Activated B cell treated with CpG ODN at 0.5 μM for 24 hours (primary cell): ENCODE measurements at regions of chr3 and their contacts with region 1.

Region 1: GRCh38 chr3:102038477-102039142 is 189.3 kb downstream of the NFKBIZ start:
- DNase-seq: no peak
- ATAC-seq: peak; percentile 82
- H3K4me3 Mint-ChIP-seq: peak overlapping the region; percentile 56
- H3K27ac Mint-ChIP-seq: peak overlapping the region; percentile 91
- H3K4me1 Mint-ChIP-seq: peaks cover 43% of the 10 kb centered on the region
- H3K27me3 Mint-ChIP-seq: no peaks in the 10 kb centered on the region
- CTCF ChIP-seq: no peak

Region 2: DNA sequence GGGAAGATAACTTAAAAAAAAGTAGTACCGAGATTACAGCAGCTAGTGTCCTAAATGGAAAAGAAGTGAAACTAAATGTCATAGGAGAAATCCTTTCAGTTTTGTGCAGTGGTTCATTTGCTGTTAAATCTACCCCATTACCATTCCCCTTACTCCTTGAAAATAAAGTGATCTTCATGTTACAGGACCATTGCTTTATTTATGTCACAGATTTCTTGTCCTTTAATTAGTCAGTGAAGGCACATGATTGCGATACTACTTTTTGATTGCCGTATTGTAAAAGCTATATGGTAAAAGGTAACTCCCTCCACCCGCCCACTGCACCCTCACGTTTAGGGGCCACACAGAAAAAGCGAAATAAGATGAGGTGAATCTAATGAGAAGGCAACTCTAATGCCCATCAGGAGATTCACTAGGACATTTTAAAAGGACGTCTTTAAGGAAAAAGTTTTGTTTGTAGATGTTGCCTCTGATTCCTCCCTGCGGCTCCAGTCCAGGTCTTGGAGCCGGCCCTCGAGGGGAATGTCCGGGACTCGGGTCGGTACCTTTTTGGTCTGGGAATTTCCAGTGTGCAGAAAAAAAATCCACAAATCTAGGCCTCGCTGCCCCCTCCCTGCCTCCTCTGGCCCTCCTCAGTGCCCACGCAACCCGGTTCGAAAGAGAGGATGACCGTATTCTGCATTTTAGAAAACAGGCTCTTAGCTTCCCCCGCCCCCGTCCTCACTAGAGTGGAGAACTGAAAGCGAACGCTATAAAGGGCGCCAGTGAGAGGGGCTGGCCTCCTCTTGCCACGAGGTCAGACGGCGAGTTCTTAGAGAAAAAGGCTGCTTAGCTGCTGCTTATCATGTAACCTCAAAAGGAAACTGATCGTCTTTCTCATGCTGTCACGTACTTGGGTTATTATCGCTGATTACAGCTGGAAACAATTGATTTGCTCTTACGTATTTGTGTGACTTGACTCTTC is 211.1 kb before region 1 on chr3:
- CTCF ChIA-PET with region 1: interaction called, 3 read pairs
- POLR2A ChIA-PET with region 1: interaction called, 21 read pairs
- intact Hi-C with region 1: no loop called
- DNase-seq: peak; percentile 68
- ATAC-seq: peak; percentile 86
- H3K4me3 Mint-ChIP-seq: peak overlapping the region; percentile 87
- H3K27ac Mint-ChIP-seq: peak overlapping the region; percentile 98
- H3K4me1 Mint-ChIP-seq: peaks cover 66% of the 10 kb centered on the region
- H3K27me3 Mint-ChIP-seq: no peaks in the 10 kb centered on the region
- CTCF ChIP-seq: no peak

Region 3: GRCh38 chr3:101861212-101861788 is 177.3 kb before region 1 on chr3:
- CTCF ChIA-PET with region 1: no interaction called
- POLR2A ChIA-PET with region 1: interaction called, 14 read pairs
- intact Hi-C with region 1: loop called (anchors 2 kb)
- DNase-seq: no peak
- ATAC-seq: peak; percentile 64
- H3K4me3 Mint-ChIP-seq: peak overlapping the region; percentile 51
- H3K27ac Mint-ChIP-seq: peak overlapping the region; percentile 75
- H3K4me1 Mint-ChIP-seq: peaks cover 76% of the 10 kb centered on the region
- H3K27me3 Mint-ChIP-seq: no peaks in the 10 kb centered on the region
- CTCF ChIP-seq: no peak

Region 4: DNA sequence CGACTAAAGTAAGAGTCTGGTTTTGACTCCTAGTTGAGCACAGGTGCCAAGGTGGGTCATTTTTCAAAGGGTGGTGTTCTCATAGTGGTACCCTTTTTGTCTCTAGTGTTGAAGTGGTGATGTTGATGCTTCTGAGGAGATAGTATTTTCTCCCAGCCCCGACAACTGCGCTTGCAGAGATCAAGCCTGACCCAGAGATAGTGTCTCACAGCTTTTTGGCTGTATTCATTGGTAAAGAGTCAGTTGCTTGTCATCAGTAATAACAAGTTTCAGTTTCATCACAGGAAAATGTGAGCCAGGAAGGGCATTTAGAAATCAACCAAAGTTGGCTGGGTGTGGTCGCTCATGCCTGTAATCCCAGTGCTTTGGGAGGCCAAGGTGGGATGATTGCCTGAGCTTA is 50.0 kb before region 1 on chr3:
- CTCF ChIA-PET with region 1: no interaction called
- POLR2A ChIA-PET with region 1: interaction called, 7 read pairs
- intact Hi-C with region 1: loop called (anchors 5 kb)
- DNase-seq: no peak
- ATAC-seq: peak; percentile 36
- H3K4me3 Mint-ChIP-seq: no peak overlapping the region
- H3K27ac Mint-ChIP-seq: peak overlapping the region; percentile 75
- H3K4me1 Mint-ChIP-seq: peaks cover 52% of the 10 kb centered on the region
- H3K27me3 Mint-ChIP-seq: no peaks in the 10 kb centered on the region
- CTCF ChIP-seq: no peak

Region 5: DNA sequence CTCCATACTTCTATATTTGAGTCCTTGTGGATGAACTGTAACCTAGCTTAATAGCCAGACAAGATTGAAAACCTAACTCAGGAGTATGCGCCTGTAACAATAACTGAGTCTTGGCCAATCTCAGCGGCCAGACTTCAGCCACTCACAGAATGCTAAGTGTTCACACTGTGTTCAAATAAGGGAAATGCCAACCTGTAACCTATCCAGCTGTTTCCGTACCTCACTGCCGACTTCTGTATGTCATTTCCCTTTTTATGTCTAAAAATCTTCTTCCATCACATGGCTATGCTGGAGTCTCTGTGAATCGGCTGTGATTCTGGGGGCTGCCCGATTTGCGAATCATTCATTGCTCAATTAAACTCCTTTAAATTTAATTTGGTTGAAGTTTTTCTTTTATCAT is 20.1 kb before region 1 on chr3:
- CTCF ChIA-PET with region 1: no interaction called
- POLR2A ChIA-PET with region 1: interaction called, 14 read pairs
- intact Hi-C with region 1: no loop called
- DNase-seq: no peak
- ATAC-seq: peak; percentile 82
- H3K4me3 Mint-ChIP-seq: peak overlapping the region; percentile 15
- H3K27ac Mint-ChIP-seq: peak overlapping the region; percentile 76
- H3K4me1 Mint-ChIP-seq: peaks cover 44% of the 10 kb centered on the region
- H3K27me3 Mint-ChIP-seq: no peaks in the 10 kb centered on the region
- CTCF ChIP-seq: no peak

Region 6: GRCh38 chr3:102026656-102027055 is 12.0 kb before region 1 on chr3:
- CTCF ChIA-PET with region 1: interaction called, 5 read pairs
- POLR2A ChIA-PET with region 1: interaction called, 8 read pairs
- intact Hi-C with region 1: loop called (anchors 1 kb)
- DNase-seq: no peak
- ATAC-seq: no peak
- H3K4me3 Mint-ChIP-seq: no peak overlapping the region
- H3K27ac Mint-ChIP-seq: peak overlapping the region; percentile 1
- H3K4me1 Mint-ChIP-seq: peaks cover 35% of the 10 kb centered on the region
- H3K27me3 Mint-ChIP-seq: no peaks in the 10 kb centered on the region
- CTCF ChIP-seq: no peak